ENCODE measurements at regions of chr20 and their contacts with region 1.

Region 1: GRCh38 chr20:50165684-50166554 is 12.4 kb upstream of the PEDS1 start:
- DNase-seq: peak; percentile 91
- CTCF ChIP-seq: no peak

Region 2: GRCh38 chr20:49964964-49965780 is 200.7 kb before region 1 on chr20:
- in situ Hi-C with region 1: loop called (anchors 10 kb)
- DNase-seq: peak; percentile 57
- CTCF ChIP-seq: peak; percentile 53

Measured in GM13976 (cell line).